ENCODE measurements at regions of chr17 and their contacts with region 1.

Region 1: GRCh38 chr17:43878260-43879175 is 28.8 kb downstream of the MPP2 start:
- DNase-seq: peak; percentile 81 to 89
- H3K4me3 ChIP-seq: no peak overlapping the region
- H3K4me3 Mint-ChIP-seq: no peak overlapping the region
- H3K27ac Mint-ChIP-seq: peak overlapping the region; percentile 45
- H3K4me1 ChIP-seq: peaks cover 10% of the 10 kb centered on the region
- H3K4me1 Mint-ChIP-seq: peaks cover 8% of the 10 kb centered on the region
- H3K27me3 ChIP-seq: no peaks in the 10 kb centered on the region
- H3K27me3 Mint-ChIP-seq: no peaks in the 10 kb centered on the region
- CTCF ChIP-seq: peak; percentile 98 to 99

Region 2: GRCh38 chr17:43900183-43900857 is 21.8 kb after region 1 on chr17:
- CTCF ChIA-PET with region 1: no interaction called
- POLR2A ChIA-PET with region 1: no interaction called
- intact Hi-C with region 1: loop called (anchors 2 kb)
- DNase-seq: peak; percentile 93
- H3K4me3 ChIP-seq: peak overlapping the region; percentile 65
- H3K4me3 Mint-ChIP-seq: peak overlapping the region; percentile 82
- H3K27ac Mint-ChIP-seq: peak overlapping the region; percentile 28
- H3K4me1 ChIP-seq: peaks cover 7% of the 10 kb centered on the region
- H3K4me1 Mint-ChIP-seq: no peaks in the 10 kb centered on the region
- H3K27me3 ChIP-seq: no peaks in the 10 kb centered on the region
- H3K27me3 Mint-ChIP-seq: peaks cover 8% of the 10 kb centered on the region
- CTCF ChIP-seq: no peak

Region 3: DNA sequence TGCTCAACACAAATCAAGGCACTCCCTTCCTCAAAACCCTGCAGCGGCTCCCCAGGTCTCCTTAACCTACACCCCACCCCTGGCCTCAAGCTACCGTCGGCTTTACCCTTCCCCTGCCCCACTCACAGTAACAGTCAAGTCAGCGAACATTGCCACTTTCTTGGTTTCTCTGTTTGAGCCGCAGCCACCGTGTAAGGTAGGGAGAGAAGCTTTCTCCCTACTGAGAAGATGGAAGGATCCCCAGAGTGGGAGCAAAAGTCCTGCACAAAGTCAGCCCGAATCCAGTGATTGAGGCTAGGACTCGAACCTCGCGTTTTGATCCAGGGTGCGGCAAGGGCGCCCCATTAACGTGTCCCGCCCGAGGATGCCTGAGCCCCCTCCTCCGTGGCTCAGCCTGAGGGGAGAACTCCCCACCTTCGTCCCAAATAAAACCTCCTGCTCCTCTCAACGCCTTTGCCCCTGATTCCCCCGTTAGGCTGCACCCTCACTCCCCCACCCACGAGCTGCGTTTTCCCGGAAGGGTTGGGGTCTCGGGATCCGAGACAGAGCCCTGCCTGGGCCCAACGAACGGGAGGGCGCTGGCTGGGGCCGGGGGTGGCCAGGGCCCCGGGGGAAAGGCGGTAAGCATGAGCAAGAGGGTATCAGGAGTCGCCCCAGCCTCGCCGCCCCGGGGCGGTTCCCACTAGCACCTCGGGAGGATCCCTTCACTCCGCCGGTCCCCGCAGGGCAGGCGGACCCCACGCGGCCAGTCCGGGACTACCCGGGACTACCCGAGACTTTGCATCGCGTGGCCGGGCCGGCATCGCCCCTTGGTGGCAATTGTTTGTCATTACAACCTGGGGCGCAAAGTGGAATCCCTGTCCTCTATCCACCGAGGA is 116.0 kb after region 1 on chr17:
- CTCF ChIA-PET with region 1: interaction called, 6 read pairs
- POLR2A ChIA-PET with region 1: no interaction called
- intact Hi-C with region 1: loop called (anchors 1 kb)
- DNase-seq: peak; percentile 73 to 85
- H3K4me3 ChIP-seq: peak overlapping the region; percentile 17; the same call in 1 of the 2 replicates
- H3K4me3 Mint-ChIP-seq: peak overlapping the region; percentile 61
- H3K27ac Mint-ChIP-seq: no peak overlapping the region
- H3K4me1 ChIP-seq: peaks cover 11% of the 10 kb centered on the region
- H3K4me1 Mint-ChIP-seq: no peaks in the 10 kb centered on the region
- H3K27me3 ChIP-seq: no peaks in the 10 kb centered on the region
- H3K27me3 Mint-ChIP-seq: peaks cover 3% of the 10 kb centered on the region
- CTCF ChIP-seq: peak; percentile 84 to 98

Region 4: GRCh38 chr17:44108440-44109324 is 230.2 kb after region 1 on chr17:
- CTCF ChIA-PET with region 1: no interaction called
- POLR2A ChIA-PET with region 1: interaction called, 16 read pairs
- intact Hi-C with region 1: no loop called
- DNase-seq: peak; percentile 74 to 82
- H3K4me3 ChIP-seq: no peak overlapping the region
- H3K4me3 Mint-ChIP-seq: no peak overlapping the region
- H3K27ac Mint-ChIP-seq: peak overlapping the region; percentile 81
- H3K4me1 ChIP-seq: peaks cover 19% of the 10 kb centered on the region
- H3K4me1 Mint-ChIP-seq: peaks cover 7% of the 10 kb centered on the region
- H3K27me3 ChIP-seq: no peaks in the 10 kb centered on the region
- H3K27me3 Mint-ChIP-seq: no peaks in the 10 kb centered on the region
- CTCF ChIP-seq: no peak

Region 5: GRCh38 chr17:44689477-44690217 is 811.1 kb after region 1 on chr17 and contains the start of gene CCDC43:
- CTCF ChIA-PET with region 1: no interaction called
- POLR2A ChIA-PET with region 1: no interaction called
- intact Hi-C with region 1: no loop called
- DNase-seq: peak; percentile 95 to 97
- H3K4me3 ChIP-seq: peak within 1 kb of the TSS; percentile 74
- H3K4me3 Mint-ChIP-seq: peak within 1 kb of the TSS; percentile 100
- H3K27ac Mint-ChIP-seq: peak within 1 kb of the TSS; percentile 99
- H3K4me1 ChIP-seq: 0 out of 2 replicates have a peak, but pooled peaks cover 3% of the 10 kb centered on the region
- H3K4me1 Mint-ChIP-seq: no peaks in the 10 kb centered on the region
- H3K27me3 ChIP-seq: no peaks in the 10 kb centered on the region
- H3K27me3 Mint-ChIP-seq: no peaks in the 10 kb centered on the region
- CTCF ChIP-seq: no peak
- total RNA-seq, gene CCDC43: 54.3 and 54.8 TPM in 2 replicates